ENCODE measurements at regions of chr7 and their contacts with region 1.

Region 1: GRCh38 chr7:141389140-141389796 is 161.9 kb upstream of the AGK start:
- DNase-seq: no peak
- ATAC-seq: peak in 1 of 4 donors; percentile 18
- H3K4me3 ChIP-seq: no peak overlapping the region
- H3K27ac ChIP-seq: no peak overlapping the region
- H3K4me1 ChIP-seq: peaks cover 0 to 34% (median 2%) of the 10 kb centered on the region in 12 donors
- H3K27me3 ChIP-seq: no peaks in the 10 kb centered on the region
- CTCF ChIP-seq: no peak
- POLR2A ChIP-seq: no peak

Region 2: GRCh38 chr7:141251957-141252356 is 137.3 kb before region 1 on chr7:
- intact Hi-C with region 1: no loop called
- DNase-seq: no peak
- ATAC-seq: peak in 1 of 4 donors; percentile 41
- H3K4me3 ChIP-seq: no peak overlapping the region
- H3K27ac ChIP-seq: no peak overlapping the region
- H3K4me1 ChIP-seq: no peaks in the 10 kb centered on the region
- H3K27me3 ChIP-seq: no peaks in the 10 kb centered on the region
- CTCF ChIP-seq: peak in 5 of 12 donors; percentile 12 to 28 (median 18)
- POLR2A ChIP-seq: no peak

Region 3: DNA sequence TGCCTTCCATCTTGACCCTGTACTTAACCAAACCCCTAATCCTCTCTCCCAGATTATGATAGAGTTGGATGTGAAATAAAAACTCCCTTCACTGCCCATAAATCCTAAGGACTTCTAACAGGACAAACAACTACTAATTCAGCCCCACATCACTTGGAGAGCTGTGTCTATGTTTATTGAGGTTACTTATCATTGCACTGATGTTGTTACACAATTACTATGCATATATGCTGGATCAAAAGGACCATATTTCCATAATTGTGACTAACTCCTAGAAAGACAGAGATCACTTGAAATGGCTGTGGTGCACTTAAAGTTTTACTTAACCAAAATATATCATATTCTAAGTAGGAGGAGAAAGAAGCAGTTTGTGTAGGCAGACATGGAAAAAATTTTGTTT is 17.1 kb after region 1 on chr7:
- intact Hi-C with region 1: loop called in 1 of 10 experiments (anchors 1 kb)
- DNase-seq: no peak
- ATAC-seq: no peak
- H3K4me3 ChIP-seq: no peak overlapping the region
- H3K27ac ChIP-seq: no peak overlapping the region
- H3K4me1 ChIP-seq: peaks cover 0 to 50% (median 5%) of the 10 kb centered on the region in 12 donors
- H3K27me3 ChIP-seq: no peaks in the 10 kb centered on the region
- CTCF ChIP-seq: no peak
- POLR2A ChIP-seq: no peak

Measured in heart left ventricle (tissue), 16 donors.